B cell (primary cell): ENCODE measurements at regions of chr17 and their contacts with region 1.

Region 1: GRCh38 chr17:29931231-29931932 is 1.4 kb upstream of the SSH2 start:
- DNase-seq: peak; percentile 92
- ATAC-seq: peak; percentile 71
- H3K4me3 ChIP-seq: peak overlapping the region; percentile 77 to 94 (median 86)
- H3K4me3 Mint-ChIP-seq: no peak overlapping the region
- H3K27ac ChIP-seq: peak overlapping the region; percentile 28 to 86
- H3K27ac Mint-ChIP-seq: no peak overlapping the region
- H3K4me1 ChIP-seq: peaks cover 26 to 30% of the 10 kb centered on the region in 2 donors
- H3K4me1 Mint-ChIP-seq: peaks cover 34% of the 10 kb centered on the region
- H3K27me3 ChIP-seq: no peaks in the 10 kb centered on the region
- H3K27me3 Mint-ChIP-seq: no peaks in the 10 kb centered on the region
- CTCF ChIP-seq: peak; percentile 91

Region 2: DNA sequence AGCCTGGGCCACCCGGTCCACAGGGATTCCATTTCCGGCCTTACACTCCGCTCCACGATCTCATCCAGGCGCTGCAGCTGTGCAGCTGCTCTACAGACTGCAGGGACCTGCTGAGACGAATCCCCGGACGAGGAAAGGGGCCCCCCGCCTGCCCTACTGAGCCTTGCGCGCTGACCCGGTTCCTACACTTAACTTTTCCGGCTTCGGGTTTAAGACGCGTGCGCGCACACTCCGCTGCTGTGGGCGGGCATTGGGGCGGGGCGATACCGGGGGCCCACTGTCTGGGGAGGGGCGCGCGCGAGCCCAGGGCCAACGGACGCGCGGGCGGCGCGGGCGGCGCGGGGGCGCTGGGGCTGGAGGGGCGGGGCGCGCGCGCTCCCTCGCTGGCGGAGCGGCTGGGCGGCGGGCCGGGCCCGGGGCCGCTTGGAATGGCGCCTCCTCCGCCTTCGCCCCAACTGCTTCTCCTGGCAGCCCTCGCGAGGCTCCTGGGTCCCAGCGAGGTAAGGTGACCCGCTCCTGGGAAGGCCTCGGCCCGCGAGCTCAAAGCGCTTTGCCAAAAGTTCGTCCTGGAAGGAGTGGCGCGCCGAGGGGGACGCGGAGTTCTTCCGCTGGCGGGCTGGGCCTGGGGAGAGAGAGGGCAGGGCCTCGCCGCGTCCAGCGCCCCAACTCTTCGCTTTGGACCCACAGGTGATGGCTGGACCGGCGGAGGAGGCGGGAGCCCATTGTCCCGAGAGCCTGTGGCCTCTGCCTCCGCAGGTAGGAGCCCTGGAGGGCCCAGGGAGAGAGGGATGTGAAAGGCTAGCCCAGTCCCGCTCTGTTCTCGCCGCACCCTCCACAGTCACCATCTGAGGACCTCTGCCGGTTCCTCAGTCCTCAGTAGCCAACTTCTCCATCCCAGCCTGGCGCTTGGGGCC is 362.8 kb before region 1 on chr17 and contains the start of gene TP53I13:
- CTCF ChIA-PET with region 1: no interaction called
- POLR2A ChIA-PET with region 1: no interaction called
- intact Hi-C with region 1: loop called (anchors 5 kb)
- DNase-seq: peak; percentile 92
- ATAC-seq: peak; percentile 60
- H3K4me3 ChIP-seq: peak within 1 kb of the TSS; percentile 71 to 99 (median 80)
- H3K4me3 Mint-ChIP-seq: peak within 1 kb of the TSS; percentile 99
- H3K27ac ChIP-seq: peak within 1 kb of the TSS; percentile 71 to 76
- H3K27ac Mint-ChIP-seq: peak within 1 kb of the TSS; percentile 97
- H3K4me1 ChIP-seq: peaks cover 27 to 40% of the 10 kb centered on the region in 2 donors
- H3K4me1 Mint-ChIP-seq: peaks cover 39% of the 10 kb centered on the region
- H3K27me3 ChIP-seq: no peaks in the 10 kb centered on the region
- H3K27me3 Mint-ChIP-seq: no peaks in the 10 kb centered on the region
- CTCF ChIP-seq: no peak
- total RNA-seq, gene TP53I13: 220 and 224 TPM in 2 replicates

Region 3: DNA sequence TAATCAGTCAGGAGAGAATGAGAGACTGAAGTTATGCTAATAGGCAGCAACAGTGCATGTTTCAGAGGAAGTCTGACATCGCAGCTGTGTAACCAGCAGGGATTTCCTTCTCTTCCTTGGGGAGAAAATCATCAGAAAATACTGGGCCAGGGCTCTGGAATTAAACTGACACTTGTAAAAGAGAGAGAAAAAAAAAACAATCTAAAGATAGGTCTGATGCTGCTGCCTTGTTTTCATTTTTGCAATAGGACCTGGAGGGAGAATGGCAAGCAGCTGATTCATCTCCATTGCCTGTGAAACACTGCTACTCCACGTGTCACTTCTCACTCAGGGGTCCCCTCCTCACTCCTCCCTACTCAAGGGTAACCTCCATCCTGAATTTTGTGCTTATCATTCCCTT is 291.0 kb before region 1 on chr17:
- CTCF ChIA-PET with region 1: interaction called, 40 read pairs
- POLR2A ChIA-PET with region 1: interaction called, 6 read pairs
- intact Hi-C with region 1: loop called (anchors 1 kb)
- DNase-seq: no peak
- ATAC-seq: no peak
- H3K4me3 ChIP-seq: no peak overlapping the region
- H3K4me3 Mint-ChIP-seq: no peak overlapping the region
- H3K27ac ChIP-seq: peak overlapping the region in 1 of 2 donors; percentile 64
- H3K27ac Mint-ChIP-seq: peak overlapping the region; percentile 65
- H3K4me1 ChIP-seq: peaks cover 15 to 19% of the 10 kb centered on the region in 2 donors
- H3K4me1 Mint-ChIP-seq: peaks cover 32% of the 10 kb centered on the region
- H3K27me3 ChIP-seq: no peaks in the 10 kb centered on the region
- H3K27me3 Mint-ChIP-seq: no peaks in the 10 kb centered on the region
- CTCF ChIP-seq: no peak

Region 4: GRCh38 chr17:29777663-29778062 is 153.7 kb before region 1 on chr17:
- CTCF ChIA-PET with region 1: interaction called, 15 read pairs
- POLR2A ChIA-PET with region 1: interaction called, 3 read pairs
- intact Hi-C with region 1: no loop called
- DNase-seq: no peak
- ATAC-seq: no peak
- H3K4me3 ChIP-seq: no peak overlapping the region
- H3K4me3 Mint-ChIP-seq: no peak overlapping the region
- H3K27ac ChIP-seq: no peak overlapping the region
- H3K27ac Mint-ChIP-seq: no peak overlapping the region
- H3K4me1 ChIP-seq: peaks cover 9 to 10% of the 10 kb centered on the region in 2 donors
- H3K4me1 Mint-ChIP-seq: peaks cover 12% of the 10 kb centered on the region
- H3K27me3 ChIP-seq: no peaks in the 10 kb centered on the region
- H3K27me3 Mint-ChIP-seq: no peaks in the 10 kb centered on the region
- CTCF ChIP-seq: no peak

Region 5: DNA sequence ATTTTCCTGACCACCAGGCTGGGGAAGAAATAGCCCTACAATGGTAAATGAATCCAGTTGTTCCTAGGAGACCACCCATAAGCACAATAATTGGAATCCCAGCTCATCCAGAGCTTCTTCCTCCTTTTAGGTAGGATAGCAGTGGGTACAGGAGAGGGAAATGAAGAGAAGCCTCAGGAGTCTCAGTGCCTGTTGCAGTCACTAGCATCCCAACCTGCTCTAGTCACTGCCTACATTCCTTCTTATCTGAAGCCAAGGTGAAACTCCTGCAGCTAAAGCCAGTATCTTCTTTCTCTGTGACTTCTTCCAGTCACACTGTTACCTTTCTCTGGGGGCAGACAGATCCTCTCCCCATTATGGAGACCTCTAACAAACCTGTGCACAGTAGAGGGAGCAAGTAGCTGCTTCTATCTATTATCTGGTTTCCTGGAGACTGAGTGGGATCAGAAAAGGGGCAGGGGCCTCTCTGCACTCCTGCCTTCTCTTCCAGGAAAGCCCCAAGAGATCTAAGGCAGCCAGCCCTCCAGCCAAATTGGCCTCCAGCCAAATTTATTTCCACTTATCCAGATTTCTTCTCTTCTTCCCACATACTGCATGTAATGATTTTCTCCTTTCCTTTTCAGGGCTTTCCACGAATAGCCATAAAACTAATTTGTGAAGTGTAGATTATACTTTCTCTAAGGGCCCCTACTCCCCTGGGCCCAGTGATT is 86.9 kb before region 1 on chr17:
- CTCF ChIA-PET with region 1: interaction called, 18 read pairs
- POLR2A ChIA-PET with region 1: interaction called, 5 read pairs
- intact Hi-C with region 1: no loop called
- DNase-seq: no peak
- ATAC-seq: no peak
- H3K4me3 ChIP-seq: no peak overlapping the region
- H3K4me3 Mint-ChIP-seq: no peak overlapping the region
- H3K27ac ChIP-seq: no peak overlapping the region
- H3K27ac Mint-ChIP-seq: no peak overlapping the region
- H3K4me1 ChIP-seq: no peaks in the 10 kb centered on the region
- H3K4me1 Mint-ChIP-seq: peaks cover 5% of the 10 kb centered on the region
- H3K27me3 ChIP-seq: no peaks in the 10 kb centered on the region
- H3K27me3 Mint-ChIP-seq: no peaks in the 10 kb centered on the region
- CTCF ChIP-seq: no peak

Region 6: GRCh38 chr17:29948448-29949215 is 17.2 kb after region 1 on chr17:
- CTCF ChIA-PET with region 1: interaction called, 21 read pairs
- POLR2A ChIA-PET with region 1: interaction called, 3 read pairs
- intact Hi-C with region 1: no loop called
- DNase-seq: peak; percentile 39
- ATAC-seq: peak; percentile 74
- H3K4me3 ChIP-seq: peak overlapping the region in 1 of 5 experiments; percentile 15
- H3K4me3 Mint-ChIP-seq: peak overlapping the region; percentile 11
- H3K27ac ChIP-seq: peak overlapping the region; percentile 25 to 67
- H3K27ac Mint-ChIP-seq: peak overlapping the region; percentile 77
- H3K4me1 ChIP-seq: peaks cover 25 to 32% of the 10 kb centered on the region in 2 donors
- H3K4me1 Mint-ChIP-seq: peaks cover 33% of the 10 kb centered on the region
- H3K27me3 ChIP-seq: no peaks in the 10 kb centered on the region
- H3K27me3 Mint-ChIP-seq: no peaks in the 10 kb centered on the region
- CTCF ChIP-seq: no peak

Region 7: GRCh38 chr17:30244853-30245385 is 313.5 kb after region 1 on chr17:
- CTCF ChIA-PET with region 1: no interaction called
- POLR2A ChIA-PET with region 1: no interaction called
- intact Hi-C with region 1: no loop called
- DNase-seq: no peak
- ATAC-seq: no peak
- H3K4me3 ChIP-seq: no peak overlapping the region
- H3K4me3 Mint-ChIP-seq: no peak overlapping the region
- H3K27ac ChIP-seq: no peak overlapping the region
- H3K27ac Mint-ChIP-seq: no peak overlapping the region
- H3K4me1 ChIP-seq: no peaks in the 10 kb centered on the region
- H3K4me1 Mint-ChIP-seq: no peaks in the 10 kb centered on the region
- H3K27me3 ChIP-seq: peaks cover 0 to under 1% (median 0%) of the 10 kb centered on the region in 4 experiments
- H3K27me3 Mint-ChIP-seq: peaks cover 8% of the 10 kb centered on the region
- CTCF ChIP-seq: no peak

Region 8: DNA sequence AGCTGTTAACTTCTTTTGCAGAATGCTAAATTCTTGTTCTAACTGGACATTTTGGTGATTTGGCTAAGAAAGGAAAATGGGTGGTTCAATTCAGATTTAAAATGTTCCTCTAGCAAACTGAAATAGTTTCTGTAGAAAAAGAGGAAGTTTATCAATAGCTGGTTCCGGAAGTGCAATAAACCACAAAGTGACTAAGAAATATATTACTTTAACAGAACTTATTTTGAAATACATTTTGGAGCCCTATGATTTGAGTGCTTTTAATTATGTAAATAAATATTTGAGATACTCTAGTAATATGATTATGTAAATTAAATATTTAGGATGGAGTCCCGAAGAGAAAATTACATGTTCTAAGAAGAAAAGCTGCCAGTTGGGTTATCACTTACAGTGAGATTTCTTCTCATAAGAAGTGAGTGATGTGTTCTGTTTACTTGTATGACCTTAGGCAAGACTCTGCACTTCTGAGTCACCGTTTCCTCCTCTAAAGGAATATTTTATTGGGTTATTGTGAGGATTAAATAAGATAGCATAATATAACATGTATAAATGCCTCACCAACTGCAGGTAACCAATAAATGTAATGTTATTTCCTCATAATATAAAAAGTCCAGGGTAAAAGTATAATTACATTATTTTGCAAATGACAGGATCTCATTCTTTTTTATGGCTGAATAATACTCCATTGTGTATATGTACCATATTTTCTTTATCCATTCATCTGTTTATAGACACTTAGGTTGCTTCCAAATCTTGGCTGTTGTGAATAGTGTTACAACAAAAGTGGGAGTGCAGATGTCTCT is 1382.8 kb after region 1 on chr17 and contains the start of gene EVI2B:
- CTCF ChIA-PET with region 1: no interaction called
- POLR2A ChIA-PET with region 1: no interaction called
- intact Hi-C with region 1: loop called (anchors 2 kb)
- DNase-seq: peak; percentile 76
- ATAC-seq: peak; percentile 31
- H3K4me3 ChIP-seq: peak within 1 kb of the TSS; percentile 58 to 98 (median 80)
- H3K4me3 Mint-ChIP-seq: peak within 1 kb of the TSS; percentile 86
- H3K27ac ChIP-seq: peak within 1 kb of the TSS; percentile 54 to 70
- H3K27ac Mint-ChIP-seq: peak within 1 kb of the TSS; percentile 91
- H3K4me1 ChIP-seq: peaks cover 27 to 45% of the 10 kb centered on the region in 2 donors
- H3K4me1 Mint-ChIP-seq: peaks cover 61% of the 10 kb centered on the region
- H3K27me3 ChIP-seq: no peaks in the 10 kb centered on the region
- H3K27me3 Mint-ChIP-seq: no peaks in the 10 kb centered on the region
- CTCF ChIP-seq: no peak
- total RNA-seq, gene EVI2B: 125 and 132 TPM in 2 replicates